MCF 10A (cell line): ENCODE measurements at regions of chr16 and their contacts with region 1.

Region 1: DNA sequence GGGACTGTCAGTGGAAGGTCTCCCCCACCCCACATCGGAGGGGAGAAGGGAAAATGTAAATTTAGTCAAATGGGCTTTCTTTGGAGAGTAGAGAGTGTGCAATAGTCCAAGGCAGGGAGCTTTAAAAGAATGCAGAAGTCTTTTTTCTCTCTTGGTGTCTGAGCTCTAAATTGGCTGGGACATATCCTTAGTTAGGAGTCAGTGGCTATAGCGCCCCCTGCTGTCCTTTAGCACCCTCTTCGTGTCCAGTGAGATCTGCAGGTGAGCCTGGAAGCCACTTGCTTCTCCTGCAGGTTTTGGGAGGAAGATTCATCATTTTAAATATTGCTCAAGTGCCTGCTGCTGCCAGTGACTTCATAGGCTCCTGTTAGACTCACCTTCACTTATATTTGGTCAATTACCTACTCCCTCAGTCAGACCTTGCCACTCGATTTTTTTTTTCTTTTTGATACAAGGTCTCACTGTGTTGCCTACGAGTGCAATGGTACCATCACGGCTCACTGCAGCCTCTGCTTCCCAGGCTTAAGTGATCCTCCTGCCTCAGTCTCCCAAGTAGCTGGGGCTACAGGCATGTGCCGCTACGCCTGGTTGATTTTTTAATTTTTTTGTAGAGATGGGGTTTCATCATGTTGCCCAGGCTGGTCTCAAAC is 174.8 kb downstream of the PRKCB start:
- DNase-seq: peak; percentile 83
- H3K4me3 Mint-ChIP-seq: no peak overlapping the region
- H3K27ac Mint-ChIP-seq: no peak overlapping the region
- H3K4me1 Mint-ChIP-seq: no peaks in the 10 kb centered on the region
- H3K27me3 Mint-ChIP-seq: peaks cover 24% of the 10 kb centered on the region
- CTCF ChIP-seq: peak; percentile 77

Region 2: GRCh38 chr16:23914946-23915530 is 95.5 kb before region 1 on chr16:
- CTCF ChIA-PET with region 1: no interaction called
- POLR2A ChIA-PET with region 1: no interaction called
- intact Hi-C with region 1: no loop called
- DNase-seq: no peak
- H3K4me3 Mint-ChIP-seq: no peak overlapping the region
- H3K27ac Mint-ChIP-seq: no peak overlapping the region
- H3K4me1 Mint-ChIP-seq: no peaks in the 10 kb centered on the region
- H3K27me3 Mint-ChIP-seq: no peaks in the 10 kb centered on the region
- CTCF ChIP-seq: no peak

Region 3: GRCh38 chr16:23999663-24000062 is 10.9 kb before region 1 on chr16:
- CTCF ChIA-PET with region 1: interaction called, 32 read pairs
- POLR2A ChIA-PET with region 1: interaction called, 3 read pairs
- intact Hi-C with region 1: no loop called
- DNase-seq: no peak
- H3K4me3 Mint-ChIP-seq: no peak overlapping the region
- H3K27ac Mint-ChIP-seq: no peak overlapping the region
- H3K4me1 Mint-ChIP-seq: no peaks in the 10 kb centered on the region
- H3K27me3 Mint-ChIP-seq: peaks cover 28% of the 10 kb centered on the region
- CTCF ChIP-seq: no peak